ENCODE measurements at regions of chr22 and their contacts with region 1.

Region 1: DNA sequence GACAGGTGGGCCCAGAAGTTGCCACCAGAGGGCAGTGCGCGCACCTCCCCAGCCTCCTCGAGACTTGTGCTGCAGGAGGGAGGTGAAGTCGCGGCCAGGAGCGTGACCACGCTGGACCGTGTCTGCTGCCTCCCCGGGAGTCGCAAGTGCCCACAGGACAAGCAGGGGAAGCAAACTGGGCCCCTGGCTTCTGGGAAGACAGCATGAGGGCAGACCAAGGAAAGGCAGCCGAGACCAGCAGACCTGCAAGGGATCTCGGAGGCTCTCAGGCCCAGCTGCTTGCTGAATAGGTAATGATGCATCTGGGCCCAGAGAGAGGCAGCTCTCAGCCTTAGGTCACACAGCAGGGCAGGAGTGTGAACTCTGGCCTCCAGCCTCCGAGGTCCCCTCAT is 17.0 kb upstream of the IL2RB start:
- DNase-seq: peak; percentile 92
- ATAC-seq: peak; percentile 20
- H3K4me3 Mint-ChIP-seq: peak overlapping the region; percentile 53
- H3K27ac Mint-ChIP-seq: peak overlapping the region; percentile 82
- H3K4me1 Mint-ChIP-seq: peaks cover 71% of the 10 kb centered on the region
- H3K27me3 Mint-ChIP-seq: no peaks in the 10 kb centered on the region

Region 2: GRCh38 chr22:37077884-37078485 is 88.7 kb before region 1 on chr22:
- CTCF ChIA-PET with region 1: interaction called, 13 read pairs
- POLR2A ChIA-PET with region 1: interaction called, 11 read pairs
- intact Hi-C with region 1: loop called (anchors 1 kb)
- DNase-seq: peak; percentile 94
- ATAC-seq: peak; percentile 18
- H3K4me3 Mint-ChIP-seq: no peak overlapping the region
- H3K27ac Mint-ChIP-seq: peak overlapping the region; percentile 94
- H3K4me1 Mint-ChIP-seq: peaks cover 59% of the 10 kb centered on the region
- H3K27me3 Mint-ChIP-seq: peaks cover 10% of the 10 kb centered on the region

Region 3: GRCh38 chr22:37121887-37122591 is 44.6 kb before region 1 on chr22:
- CTCF ChIA-PET with region 1: interaction called, 24 read pairs
- POLR2A ChIA-PET with region 1: interaction called, 39 read pairs
- intact Hi-C with region 1: loop called (anchors 1 kb)
- DNase-seq: peak; percentile 96
- ATAC-seq: peak; percentile 94
- H3K4me3 Mint-ChIP-seq: peak overlapping the region; percentile 79
- H3K27ac Mint-ChIP-seq: peak overlapping the region; percentile 98
- H3K4me1 Mint-ChIP-seq: peaks cover 76% of the 10 kb centered on the region
- H3K27me3 Mint-ChIP-seq: no peaks in the 10 kb centered on the region

Region 4: DNA sequence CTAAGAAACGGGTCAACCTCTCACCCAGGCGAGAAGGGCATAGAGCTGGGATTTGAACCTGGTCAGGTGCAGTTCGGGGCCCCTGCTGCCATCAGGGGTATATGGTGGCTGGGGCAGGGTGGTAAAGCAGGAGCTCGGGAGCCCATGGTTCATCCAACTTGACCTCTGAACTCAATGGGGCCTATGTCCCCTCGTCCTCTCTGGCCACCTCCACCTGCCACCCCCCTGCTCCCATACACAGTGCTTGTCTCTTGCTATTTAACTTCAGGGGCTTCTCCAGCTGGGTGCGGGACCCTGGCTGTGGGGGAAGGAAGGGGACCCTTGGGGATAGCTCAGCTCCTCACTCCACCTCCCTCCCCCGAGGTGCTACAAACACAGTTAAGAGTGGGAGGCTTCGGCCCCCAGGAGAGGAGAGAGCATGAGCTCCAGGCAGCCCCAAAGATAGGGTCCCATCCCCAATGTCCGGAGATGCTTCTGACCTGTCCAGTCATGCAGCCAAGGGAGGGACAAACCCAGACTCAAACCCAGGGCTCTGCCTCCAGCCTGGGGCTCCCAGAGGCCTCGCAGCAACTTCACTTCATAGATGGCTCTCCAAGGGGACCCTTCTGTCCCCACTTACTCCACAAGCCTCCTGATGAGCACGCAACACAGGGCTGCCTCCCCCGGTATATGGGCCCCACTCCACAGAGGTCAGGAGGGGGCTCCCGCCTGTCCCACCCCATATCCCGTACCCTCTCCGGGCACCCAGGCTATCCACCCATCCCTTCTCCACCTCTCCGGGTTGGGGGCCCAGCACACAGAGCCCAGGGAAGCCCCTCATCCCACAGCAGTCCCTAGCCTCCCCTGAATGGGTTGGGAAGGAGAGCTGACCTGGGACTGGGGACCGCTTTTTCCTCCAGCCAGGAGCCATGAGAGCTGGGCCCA is 17.7 kb before region 1 on chr22:
- CTCF ChIA-PET with region 1: interaction called, 43 read pairs
- POLR2A ChIA-PET with region 1: interaction called, 35 read pairs
- intact Hi-C with region 1: loop called (anchors 1 kb)
- DNase-seq: no peak
- ATAC-seq: no peak
- H3K4me3 Mint-ChIP-seq: peak overlapping the region; percentile 84
- H3K27ac Mint-ChIP-seq: peak overlapping the region; percentile 91
- H3K4me1 Mint-ChIP-seq: peaks cover 56% of the 10 kb centered on the region
- H3K27me3 Mint-ChIP-seq: no peaks in the 10 kb centered on the region

Region 5: DNA sequence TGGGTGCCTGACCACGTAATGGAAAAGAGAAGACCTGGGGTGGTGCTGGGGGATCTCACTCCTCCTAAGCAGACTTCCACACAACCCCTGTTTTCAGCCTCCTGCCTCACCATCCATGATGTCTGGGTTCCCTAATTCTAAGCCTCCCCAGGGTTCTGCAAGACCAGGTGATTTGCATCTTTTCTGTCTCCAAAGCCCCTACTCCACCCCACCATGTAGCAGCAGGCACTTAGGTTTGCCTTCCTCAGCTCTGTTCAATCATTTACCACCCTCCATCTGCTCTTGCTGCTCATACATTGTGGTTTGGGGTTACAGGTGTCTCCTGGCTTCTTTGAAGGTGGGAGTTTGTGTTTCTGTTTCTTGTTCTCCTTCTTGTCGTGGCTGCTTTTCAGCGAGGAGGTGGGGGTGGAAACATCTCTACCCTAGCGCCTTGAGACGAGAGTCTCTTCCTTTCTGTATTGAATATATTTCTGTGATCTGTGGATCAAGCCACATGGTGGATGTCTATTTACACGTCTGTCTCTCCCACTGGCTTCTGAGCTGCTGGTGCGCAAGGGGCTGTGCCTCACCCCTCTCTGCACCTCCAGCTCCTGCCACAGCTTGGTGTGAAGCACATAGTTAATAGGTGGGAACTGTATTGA is 52.2 kb after region 1 on chr22:
- CTCF ChIA-PET with region 1: interaction called, 13 read pairs
- POLR2A ChIA-PET with region 1: interaction called, 3 read pairs
- intact Hi-C with region 1: loop called (anchors 1 to 2 kb)
- DNase-seq: peak; percentile 83
- ATAC-seq: peak; percentile 68
- H3K4me3 Mint-ChIP-seq: peak overlapping the region; percentile 78
- H3K27ac Mint-ChIP-seq: peak overlapping the region; percentile 94
- H3K4me1 Mint-ChIP-seq: peaks cover 79% of the 10 kb centered on the region
- H3K27me3 Mint-ChIP-seq: no peaks in the 10 kb centered on the region

Region 6: DNA sequence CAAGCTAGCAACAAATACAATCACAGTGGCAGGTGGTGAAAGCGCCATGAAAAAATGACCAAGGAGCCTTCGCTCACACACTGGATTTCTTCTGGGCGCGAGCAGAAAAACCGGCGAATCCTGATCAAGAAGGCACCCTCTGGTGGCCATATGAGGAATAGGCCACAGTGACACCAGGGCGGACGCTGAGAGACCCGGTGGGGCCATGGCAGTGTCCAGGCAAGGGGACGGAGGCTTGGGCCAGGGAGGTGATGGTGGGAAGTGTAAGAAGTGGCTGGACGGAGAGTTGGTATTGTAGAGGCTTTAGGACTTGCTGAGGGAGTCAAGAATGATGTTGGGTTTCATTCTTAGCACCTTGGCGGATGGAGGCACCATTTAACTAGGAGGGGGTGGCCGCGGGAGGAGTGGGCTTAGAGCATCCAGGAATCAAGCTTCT is 94.2 kb after region 1 on chr22:
- CTCF ChIA-PET with region 1: interaction called, 9 read pairs
- POLR2A ChIA-PET with region 1: no interaction called
- intact Hi-C with region 1: loop called in 1 of 2 experiments (anchors 1 kb)
- DNase-seq: peak; percentile 80
- ATAC-seq: peak; percentile 75
- H3K4me3 Mint-ChIP-seq: no peak overlapping the region
- H3K27ac Mint-ChIP-seq: peak overlapping the region; percentile 15
- H3K4me1 Mint-ChIP-seq: peaks cover 29% of the 10 kb centered on the region
- H3K27me3 Mint-ChIP-seq: no peaks in the 10 kb centered on the region